ENCODE measurements at regions of chrX and their contacts with region 1.

Region 1: GRCh38 chrX:136608295-136609171 is 39.4 kb upstream of the CD40LG start:
- DNase-seq: peak; percentile 47
- ATAC-seq: peak; percentile 43
- H3K4me3 ChIP-seq: no peak overlapping the region
- H3K4me3 Mint-ChIP-seq: no peak overlapping the region
- H3K27ac ChIP-seq: no peak overlapping the region
- H3K27ac Mint-ChIP-seq: no peak overlapping the region
- H3K4me1 ChIP-seq: peaks cover 0 to 3% of the 10 kb centered on the region in 2 donors
- H3K4me1 Mint-ChIP-seq: no peaks in the 10 kb centered on the region
- H3K27me3 ChIP-seq: no peaks in the 10 kb centered on the region
- H3K27me3 Mint-ChIP-seq: no peaks in the 10 kb centered on the region
- CTCF ChIP-seq: peak; percentile 48

Region 2: DNA sequence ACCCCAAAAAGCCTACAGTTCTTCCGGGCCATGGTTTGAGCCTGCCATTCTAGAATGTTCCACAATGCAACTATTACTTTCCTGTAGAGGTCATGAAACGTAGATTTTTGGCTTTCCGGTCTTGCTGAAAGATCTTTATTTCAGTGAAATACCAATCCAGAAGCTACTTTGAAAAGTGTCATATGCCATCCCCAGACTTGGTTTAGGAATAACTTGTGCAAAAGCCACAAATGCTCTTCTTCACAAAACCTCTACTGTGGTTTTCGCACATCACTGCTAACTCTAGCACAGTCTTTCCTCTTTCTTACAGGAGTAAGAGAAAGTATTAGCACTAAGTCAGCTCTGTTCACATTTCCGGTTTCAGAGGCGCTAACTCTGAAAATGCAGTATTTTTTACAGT is 26.7 kb after region 1 on chrX:
- CTCF ChIA-PET with region 1: no interaction called
- POLR2A ChIA-PET with region 1: no interaction called
- intact Hi-C with region 1: no loop called
- DNase-seq: no peak
- ATAC-seq: no peak
- H3K4me3 ChIP-seq: no peak overlapping the region
- H3K4me3 Mint-ChIP-seq: no peak overlapping the region
- H3K27ac ChIP-seq: no peak overlapping the region
- H3K27ac Mint-ChIP-seq: no peak overlapping the region
- H3K4me1 ChIP-seq: peaks cover 0 to 8% of the 10 kb centered on the region in 2 donors
- H3K4me1 Mint-ChIP-seq: peaks cover 12% of the 10 kb centered on the region
- H3K27me3 ChIP-seq: no peaks in the 10 kb centered on the region
- H3K27me3 Mint-ChIP-seq: no peaks in the 10 kb centered on the region
- CTCF ChIP-seq: no peak

Region 3: DNA sequence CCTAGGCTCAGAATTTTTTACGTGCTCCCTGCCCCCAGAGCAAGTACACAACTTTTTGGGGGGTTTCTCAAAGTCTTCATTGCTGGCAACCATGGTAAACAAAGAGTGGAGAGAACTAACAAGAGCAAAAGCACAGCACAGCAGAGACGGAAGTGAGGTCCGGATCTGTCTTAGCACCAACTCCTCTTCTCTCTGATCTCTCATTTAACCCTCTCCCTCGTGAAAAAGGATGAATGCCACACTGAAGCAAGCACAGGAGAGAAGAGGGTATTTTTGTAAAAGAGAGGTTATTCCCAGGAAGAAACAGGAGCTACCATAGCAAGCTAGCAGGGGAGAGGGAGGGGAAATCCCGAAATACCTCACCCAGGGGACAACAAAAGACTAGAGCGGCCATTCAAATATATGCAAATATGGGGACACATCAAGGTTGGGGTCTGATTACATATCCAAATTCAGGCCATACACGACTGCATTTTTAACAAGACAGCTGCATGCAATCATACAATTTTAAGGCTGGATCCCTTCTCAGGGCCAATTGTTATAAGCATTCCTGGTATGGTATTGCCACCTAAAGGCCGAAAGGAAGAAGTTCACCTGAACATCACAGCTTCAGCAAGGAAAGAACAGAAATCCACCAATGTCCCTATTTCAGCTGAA is 86.0 kb after region 1 on chrX:
- CTCF ChIA-PET with region 1: interaction called, 15 read pairs
- POLR2A ChIA-PET with region 1: no interaction called
- intact Hi-C with region 1: loop called (anchors 1 kb)
- DNase-seq: peak; percentile 49
- ATAC-seq: peak; percentile 66
- H3K4me3 ChIP-seq: no peak overlapping the region
- H3K4me3 Mint-ChIP-seq: peak overlapping the region; percentile 55
- H3K27ac ChIP-seq: peak overlapping the region; percentile 2 to 4
- H3K27ac Mint-ChIP-seq: peak overlapping the region; percentile 71
- H3K4me1 ChIP-seq: peaks cover 15 to 25% of the 10 kb centered on the region in 2 donors
- H3K4me1 Mint-ChIP-seq: peaks cover 23% of the 10 kb centered on the region
- H3K27me3 ChIP-seq: no peaks in the 10 kb centered on the region
- H3K27me3 Mint-ChIP-seq: no peaks in the 10 kb centered on the region
- CTCF ChIP-seq: peak; percentile 64

Region 4: DNA sequence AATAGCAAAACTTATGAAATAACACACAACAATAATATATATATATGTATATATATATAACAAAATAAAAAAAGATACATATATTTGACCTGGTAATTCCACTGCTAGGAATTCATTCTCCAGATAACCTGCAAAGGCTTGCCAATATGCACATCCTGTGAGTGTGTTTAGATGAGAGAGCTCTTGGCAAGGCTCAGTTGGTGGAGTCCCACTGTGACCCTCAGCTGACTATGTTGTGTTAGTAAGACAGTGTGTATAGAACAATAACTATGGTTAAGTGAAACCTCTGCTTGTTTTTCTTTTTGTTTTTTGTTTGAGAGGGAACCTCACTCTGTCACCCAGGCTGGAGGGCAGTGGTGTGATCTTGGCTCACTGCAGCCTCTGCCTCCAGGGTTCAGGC is 311.5 kb after region 1 on chrX:
- CTCF ChIA-PET with region 1: interaction called, 26 read pairs
- POLR2A ChIA-PET with region 1: no interaction called
- intact Hi-C with region 1: loop called (anchors 1 kb)
- DNase-seq: no peak
- ATAC-seq: no peak
- H3K4me3 ChIP-seq: no peak overlapping the region
- H3K4me3 Mint-ChIP-seq: no peak overlapping the region
- H3K27ac ChIP-seq: no peak overlapping the region
- H3K27ac Mint-ChIP-seq: no peak overlapping the region
- H3K4me1 ChIP-seq: no peaks in the 10 kb centered on the region
- H3K4me1 Mint-ChIP-seq: peaks cover 1% of the 10 kb centered on the region
- H3K27me3 ChIP-seq: no peaks in the 10 kb centered on the region
- H3K27me3 Mint-ChIP-seq: no peaks in the 10 kb centered on the region
- CTCF ChIP-seq: no peak